MCF 10A (cell line): ENCODE measurements at regions of chr1 and their contacts with region 1.

Region 1: GRCh38 chr1:48236716-48237470 is 14.4 kb downstream of the SLC5A9 start:
- DNase-seq: peak; percentile 43
- H3K4me3 Mint-ChIP-seq: no peak overlapping the region
- H3K27ac Mint-ChIP-seq: no peak overlapping the region
- H3K4me1 Mint-ChIP-seq: no peaks in the 10 kb centered on the region
- H3K27me3 Mint-ChIP-seq: no peaks in the 10 kb centered on the region
- CTCF ChIP-seq: peak; percentile 74

Region 2: DNA sequence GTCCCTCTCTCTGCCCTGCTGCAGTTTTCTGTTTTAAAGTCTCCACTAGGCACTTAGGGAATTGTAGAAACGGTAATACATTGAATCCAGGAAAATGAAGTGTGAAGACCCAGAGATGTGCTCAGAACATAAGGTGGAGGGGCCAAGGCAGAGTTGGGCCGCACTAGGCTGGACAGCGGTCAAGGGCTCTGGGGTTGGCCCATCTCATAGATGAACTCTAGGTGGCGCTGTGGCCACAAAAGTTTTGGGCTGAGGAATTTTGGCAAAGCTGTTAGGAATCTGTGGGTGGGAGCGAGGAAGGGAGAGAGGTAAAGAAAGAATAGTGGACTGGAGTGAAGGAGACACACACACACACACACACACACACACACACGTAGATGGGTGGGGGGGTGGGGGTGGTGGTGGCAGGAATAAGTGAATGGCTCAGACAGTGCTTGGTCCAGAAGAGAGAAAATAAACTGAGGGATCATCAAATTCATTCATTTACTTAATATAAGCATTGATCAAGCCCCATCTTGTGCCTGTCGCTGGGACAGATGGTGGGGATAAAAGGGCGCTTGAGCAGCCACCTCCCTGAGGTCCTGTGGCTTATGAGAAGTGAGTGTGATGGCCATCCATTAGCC is 498.2 kb before region 1 on chr1:
- CTCF ChIA-PET with region 1: interaction called, 3 read pairs
- POLR2A ChIA-PET with region 1: no interaction called
- intact Hi-C with region 1: loop called (anchors 1 kb)
- DNase-seq: peak; percentile 73
- H3K4me3 Mint-ChIP-seq: no peak overlapping the region
- H3K27ac Mint-ChIP-seq: no peak overlapping the region
- H3K4me1 Mint-ChIP-seq: no peaks in the 10 kb centered on the region
- H3K27me3 Mint-ChIP-seq: peaks cover 25% of the 10 kb centered on the region
- CTCF ChIP-seq: peak; percentile 77

Region 3: GRCh38 chr1:48093696-48094528 is 143.0 kb before region 1 on chr1:
- CTCF ChIA-PET with region 1: interaction called, 45 read pairs
- POLR2A ChIA-PET with region 1: interaction called, 4 read pairs
- intact Hi-C with region 1: loop called (anchors 1 kb)
- DNase-seq: peak; percentile 79
- H3K4me3 Mint-ChIP-seq: peak overlapping the region; percentile 73
- H3K27ac Mint-ChIP-seq: no peak overlapping the region
- H3K4me1 Mint-ChIP-seq: peaks cover 18% of the 10 kb centered on the region
- H3K27me3 Mint-ChIP-seq: peaks cover 67% of the 10 kb centered on the region
- CTCF ChIP-seq: peak; percentile 79

Region 4: GRCh38 chr1:48202030-48202752 is 34.7 kb before region 1 on chr1:
- CTCF ChIA-PET with region 1: interaction called, 60 read pairs
- POLR2A ChIA-PET with region 1: interaction called, 4 read pairs
- intact Hi-C with region 1: loop called (anchors 1 kb)
- DNase-seq: peak; percentile 85
- H3K4me3 Mint-ChIP-seq: peak overlapping the region; percentile 25
- H3K27ac Mint-ChIP-seq: peak overlapping the region; percentile 78
- H3K4me1 Mint-ChIP-seq: peaks cover 54% of the 10 kb centered on the region
- H3K27me3 Mint-ChIP-seq: no peaks in the 10 kb centered on the region
- CTCF ChIP-seq: peak; percentile 75

Region 5: GRCh38 chr1:48251323-48251722 is 14.4 kb after region 1 on chr1:
- CTCF ChIA-PET with region 1: interaction called, 10 read pairs
- POLR2A ChIA-PET with region 1: no interaction called
- intact Hi-C with region 1: no loop called
- DNase-seq: no peak
- H3K4me3 Mint-ChIP-seq: no peak overlapping the region
- H3K27ac Mint-ChIP-seq: no peak overlapping the region
- H3K4me1 Mint-ChIP-seq: no peaks in the 10 kb centered on the region
- H3K27me3 Mint-ChIP-seq: no peaks in the 10 kb centered on the region
- CTCF ChIP-seq: no peak

Region 6: GRCh38 chr1:48506870-48507269 is 270.0 kb after region 1 on chr1:
- CTCF ChIA-PET with region 1: no interaction called
- POLR2A ChIA-PET with region 1: no interaction called
- intact Hi-C with region 1: no loop called
- DNase-seq: no peak
- H3K4me3 Mint-ChIP-seq: no peak overlapping the region
- H3K27ac Mint-ChIP-seq: no peak overlapping the region
- H3K4me1 Mint-ChIP-seq: no peaks in the 10 kb centered on the region
- H3K27me3 Mint-ChIP-seq: peaks cover 17% of the 10 kb centered on the region
- CTCF ChIP-seq: no peak